GM12878 (cell line): ENCODE measurements at regions of chr15 and their contacts with region 1.

Region 1: DNA sequence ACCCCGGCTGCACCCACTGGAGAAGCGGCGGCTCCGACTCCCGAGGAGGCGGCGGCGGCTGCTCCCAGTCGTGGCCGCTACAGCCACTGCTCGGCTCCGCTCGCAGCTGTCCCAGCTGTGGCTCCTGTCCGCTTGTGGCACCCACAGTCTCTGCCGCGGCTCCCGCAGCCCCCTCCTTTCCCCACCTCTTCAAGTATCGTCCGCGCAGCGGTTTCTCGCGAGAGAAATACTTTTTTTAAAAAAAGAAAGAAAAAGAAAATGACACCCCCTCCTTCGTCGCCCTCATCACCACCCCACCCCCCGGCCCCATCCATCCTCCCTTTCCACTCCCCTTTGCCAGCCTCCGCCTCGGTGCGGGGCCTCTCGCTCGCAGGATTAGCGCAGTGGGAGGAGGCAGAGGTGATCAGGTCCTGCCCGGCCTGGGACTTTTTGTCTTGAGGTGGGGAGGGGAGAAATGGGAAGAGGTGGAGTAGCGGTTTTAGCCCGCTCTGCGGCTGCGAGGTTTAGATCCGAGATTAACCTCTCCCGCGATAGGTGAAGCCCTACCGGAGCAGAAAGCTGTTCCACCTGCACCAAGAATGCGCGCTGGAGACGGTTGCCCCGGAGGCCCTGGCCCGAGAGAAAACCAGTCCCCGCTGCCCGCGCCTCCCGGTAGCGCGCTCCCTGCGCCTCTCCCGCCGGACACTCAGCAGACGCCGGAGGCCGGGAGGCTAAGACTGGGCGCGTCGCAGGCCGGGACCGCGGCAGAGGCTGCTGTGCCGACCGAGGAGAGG is at the start of gene FBN1:
- DNase-seq: peak; percentile 33
- ATAC-seq: peak; percentile 80
- H3K4me3 ChIP-seq: peak within 1 kb of the TSS; percentile 79
- H3K27ac ChIP-seq: peak within 1 kb of the TSS; percentile 56
- H3K4me1 ChIP-seq: peaks cover 8% of the 10 kb centered on the region; the same call in 1 of the 2 replicates
- H3K27me3 ChIP-seq: no peaks in the 10 kb centered on the region
- CTCF ChIP-seq: no peak
- EP300 ChIP-seq: no peak
- POLR2A ChIP-seq: peak; percentile 89
- RAD21 ChIP-seq: no peak
- polyA plus RNA-seq, gene FBN1: 2.2 to 2.6 TPM

Region 2: DNA sequence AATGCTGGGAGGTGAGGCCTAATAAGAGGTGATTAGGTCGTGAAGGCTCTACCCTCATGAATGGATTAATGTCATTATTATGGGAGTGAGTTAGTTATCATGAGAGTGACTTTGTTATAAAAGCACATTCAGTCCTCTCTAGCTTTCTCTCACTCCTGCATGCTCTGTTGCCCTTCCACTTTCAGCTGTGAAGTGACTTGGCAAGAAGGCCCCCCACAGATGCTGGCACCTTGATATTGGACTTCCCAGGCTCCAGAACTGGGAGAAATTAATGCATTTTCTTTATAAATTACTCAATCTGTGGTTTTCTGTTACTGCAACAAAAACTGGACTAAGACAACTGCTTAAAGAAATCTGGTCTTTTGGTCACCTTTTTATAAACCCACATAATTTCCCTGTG is 144.5 kb before region 1 on chr15:
- CTCF ChIA-PET with region 1: interaction called, 3 read pairs
- POLR2A ChIA-PET with region 1: no interaction called
- RAD21 ChIA-PET with region 1: interaction called, 3 read pairs
- SMC1A ChIA-PET with region 1: no interaction called
- in situ Hi-C with region 1: no loop called
- intact Hi-C with region 1: loop called (anchors 5 kb)
- DNase-seq: peak; percentile 15
- ATAC-seq: peak; percentile 89
- H3K4me3 ChIP-seq: no peak overlapping the region
- H3K27ac ChIP-seq: peak overlapping the region; percentile 0; the same call in 1 of the 2 replicates
- H3K4me1 ChIP-seq: no peaks in the 10 kb centered on the region
- H3K27me3 ChIP-seq: no peaks in the 10 kb centered on the region
- CTCF ChIP-seq: no peak
- EP300 ChIP-seq: no peak
- POLR2A ChIP-seq: no peak
- RAD21 ChIP-seq: no peak

Region 3: DNA sequence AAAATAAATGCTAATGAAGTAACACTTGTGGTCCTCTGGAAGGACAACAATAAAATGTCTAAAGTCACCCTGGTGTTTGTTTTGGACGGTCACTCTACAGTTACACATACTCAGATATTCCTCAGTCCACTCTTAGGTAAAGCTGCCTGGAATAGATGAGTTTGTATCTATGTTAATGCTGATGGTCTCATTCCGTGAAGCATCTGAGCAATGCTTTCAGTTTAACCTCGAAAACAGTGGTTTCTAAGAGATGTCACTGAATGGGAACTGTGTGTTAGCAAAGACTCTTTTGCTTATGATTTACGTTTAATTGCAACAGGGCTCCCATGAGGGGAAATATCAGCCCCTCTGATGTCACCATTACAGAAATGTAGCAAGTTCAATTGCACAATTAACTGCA is 49.3 kb before region 1 on chr15:
- CTCF ChIA-PET with region 1: no interaction called
- POLR2A ChIA-PET with region 1: no interaction called
- RAD21 ChIA-PET with region 1: interaction called, 5 read pairs
- SMC1A ChIA-PET with region 1: interaction called, 10 read pairs
- in situ Hi-C with region 1: no loop called
- intact Hi-C with region 1: no loop called
- DNase-seq: peak; percentile 36
- ATAC-seq: peak; percentile 76
- H3K4me3 ChIP-seq: peak overlapping the region; percentile 39; the same call in 1 of the 2 replicates
- H3K27ac ChIP-seq: peak overlapping the region; percentile 49
- H3K4me1 ChIP-seq: peaks cover 11% of the 10 kb centered on the region
- H3K27me3 ChIP-seq: no peaks in the 10 kb centered on the region
- CTCF ChIP-seq: no peak
- EP300 ChIP-seq: no peak
- POLR2A ChIP-seq: no peak
- RAD21 ChIP-seq: no peak